CD4-positive, alpha-beta T cell (primary cell): ENCODE measurements at regions of chr17 and their contacts with region 1.

Region 1: GRCh38 chr17:45218895-45219661 is 2.6 kb upstream of the FMNL1 start:
- DNase-seq: peak; percentile 74 to 94 (median 86)
- ATAC-seq: peak; percentile 43
- H3K4me3 ChIP-seq: peak overlapping the region; percentile 4
- H3K4me3 Mint-ChIP-seq: peak overlapping the region; percentile 91
- H3K27ac ChIP-seq: peak overlapping the region in 1 of 2 donors; percentile 17
- H3K27ac Mint-ChIP-seq: peak overlapping the region; percentile 76
- H3K4me1 ChIP-seq: peaks cover 38% of the 10 kb centered on the region
- H3K4me1 Mint-ChIP-seq: peaks cover 36% of the 10 kb centered on the region
- H3K27me3 ChIP-seq: no peaks in the 10 kb centered on the region
- H3K27me3 Mint-ChIP-seq: no peaks in the 10 kb centered on the region
- CTCF ChIP-seq: peak; percentile 99

Region 2: GRCh38 chr17:45148183-45149036 is 70.7 kb before region 1 on chr17 and contains the start of gene HEXIM1:
- CTCF ChIA-PET with region 1: interaction called, 20 read pairs
- POLR2A ChIA-PET with region 1: interaction called, 116 read pairs
- intact Hi-C with region 1: no loop called
- DNase-seq: peak; percentile 98 to 100 (median 99)
- ATAC-seq: peak; percentile 78
- H3K4me3 ChIP-seq: peak within 1 kb of the TSS; percentile 94
- H3K4me3 Mint-ChIP-seq: peak within 1 kb of the TSS; percentile 94
- H3K27ac ChIP-seq: peak within 1 kb of the TSS; percentile 93 to 97
- H3K27ac Mint-ChIP-seq: peak within 1 kb of the TSS; percentile 99
- H3K4me1 ChIP-seq: peaks cover 71% of the 10 kb centered on the region
- H3K4me1 Mint-ChIP-seq: peaks cover 69% of the 10 kb centered on the region
- H3K27me3 ChIP-seq: no peaks in the 10 kb centered on the region
- H3K27me3 Mint-ChIP-seq: peaks cover 8% of the 10 kb centered on the region
- CTCF ChIP-seq: no peak
- total RNA-seq, gene HEXIM1: 50.5 to 50.9 TPM

Region 3: GRCh38 chr17:45235416-45236281 is 16.6 kb after region 1 on chr17:
- CTCF ChIA-PET with region 1: interaction called, 112 read pairs
- POLR2A ChIA-PET with region 1: interaction called, 346 read pairs
- intact Hi-C with region 1: loop called (anchors 1 kb)
- DNase-seq: peak; percentile 70 to 92 (median 78)
- ATAC-seq: peak; percentile 63
- H3K4me3 ChIP-seq: no peak overlapping the region
- H3K4me3 Mint-ChIP-seq: peak overlapping the region; percentile 39
- H3K27ac ChIP-seq: peak overlapping the region; percentile 41 to 44
- H3K27ac Mint-ChIP-seq: peak overlapping the region; percentile 100
- H3K4me1 ChIP-seq: peaks cover 76% of the 10 kb centered on the region
- H3K4me1 Mint-ChIP-seq: peaks cover 65% of the 10 kb centered on the region
- H3K27me3 ChIP-seq: no peaks in the 10 kb centered on the region
- H3K27me3 Mint-ChIP-seq: no peaks in the 10 kb centered on the region
- CTCF ChIP-seq: peak; percentile 93

Region 4: DNA sequence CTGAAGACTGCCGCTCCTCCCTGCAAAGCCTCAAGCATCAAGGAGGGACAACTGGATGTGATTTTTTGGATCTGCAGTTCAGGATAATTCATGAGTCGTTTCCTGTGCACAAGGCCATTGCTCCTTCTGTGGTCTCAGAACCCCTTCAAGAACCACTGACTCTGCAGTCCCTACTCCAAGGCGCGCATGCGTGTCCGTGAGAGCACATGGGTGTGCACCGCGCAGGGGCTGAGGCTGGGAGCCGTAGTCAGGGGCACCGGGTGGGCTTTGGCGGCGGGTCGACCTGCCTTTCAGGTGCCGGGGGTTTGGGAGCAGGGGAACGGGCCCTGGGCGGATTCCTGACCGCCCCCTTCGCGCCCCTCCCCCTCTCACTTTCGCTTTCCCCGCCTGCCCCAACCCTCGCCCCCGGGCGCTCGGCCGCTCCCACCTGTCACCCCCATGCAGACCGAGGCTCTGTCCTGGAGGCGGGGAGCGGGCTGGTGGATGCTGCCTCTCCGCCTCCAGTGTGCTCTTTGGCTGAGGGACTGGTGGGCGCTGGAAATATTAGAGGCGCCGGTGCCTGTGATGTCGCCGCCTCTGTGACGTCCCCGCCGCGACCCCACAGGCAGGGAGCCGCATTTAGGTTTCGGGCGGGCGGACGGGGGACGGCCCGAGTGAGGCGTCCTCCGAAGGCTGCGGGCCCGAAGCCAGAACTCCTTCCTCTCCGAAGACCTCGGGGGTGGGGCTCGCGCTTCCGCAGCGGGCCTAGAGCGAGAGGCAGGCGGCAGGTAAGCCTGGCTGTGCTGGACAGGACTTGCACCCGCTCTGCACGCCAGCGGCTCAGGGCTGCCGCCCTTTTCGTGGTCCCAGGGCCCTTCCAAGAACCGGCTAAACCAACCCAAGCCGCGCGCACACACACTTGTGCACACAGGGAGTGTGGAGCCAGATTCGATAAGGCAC is 42.8 kb after region 1 on chr17 and contains the start of gene SPATA32:
- CTCF ChIA-PET with region 1: interaction called, 10 read pairs
- POLR2A ChIA-PET with region 1: interaction called, 23 read pairs
- intact Hi-C with region 1: no loop called
- DNase-seq: peak; percentile 38 to 80 (median 66)
- ATAC-seq: peak; percentile 88
- H3K4me3 ChIP-seq: peak within 1 kb of the TSS; percentile 75
- H3K4me3 Mint-ChIP-seq: peak within 1 kb of the TSS; percentile 89
- H3K27ac ChIP-seq: peak within 1 kb of the TSS; percentile 65
- H3K27ac Mint-ChIP-seq: peak within 1 kb of the TSS; percentile 84
- H3K4me1 ChIP-seq: peaks cover 37% of the 10 kb centered on the region
- H3K4me1 Mint-ChIP-seq: peaks cover 40% of the 10 kb centered on the region
- H3K27me3 ChIP-seq: no peaks in the 10 kb centered on the region
- H3K27me3 Mint-ChIP-seq: no peaks in the 10 kb centered on the region
- CTCF ChIP-seq: no peak
- total RNA-seq, gene SPATA32: 0.20 to 0.27 TPM

Region 5: GRCh38 chr17:45277216-45277849 is 58.3 kb after region 1 on chr17:
- CTCF ChIA-PET with region 1: interaction called, 32 read pairs
- POLR2A ChIA-PET with region 1: interaction called, 10 read pairs
- intact Hi-C with region 1: loop called in 1 of 2 experiments (anchors 2 kb)
- DNase-seq: peak; percentile 84 to 97 (median 90)
- ATAC-seq: peak; percentile 96
- H3K4me3 ChIP-seq: no peak overlapping the region
- H3K4me3 Mint-ChIP-seq: no peak overlapping the region
- H3K27ac ChIP-seq: peak overlapping the region in 1 of 2 donors; percentile 22
- H3K27ac Mint-ChIP-seq: peak overlapping the region; percentile 51
- H3K4me1 ChIP-seq: peaks cover 6% of the 10 kb centered on the region
- H3K4me1 Mint-ChIP-seq: peaks cover 12% of the 10 kb centered on the region
- H3K27me3 ChIP-seq: no peaks in the 10 kb centered on the region
- H3K27me3 Mint-ChIP-seq: no peaks in the 10 kb centered on the region
- CTCF ChIP-seq: peak; percentile 83

Region 6: GRCh38 chr17:45385331-45385997 is 166.4 kb after region 1 on chr17:
- CTCF ChIA-PET with region 1: interaction called, 29 read pairs
- POLR2A ChIA-PET with region 1: interaction called, 10 read pairs
- intact Hi-C with region 1: loop called (anchors 1 kb)
- DNase-seq: peak; percentile 77 to 97 (median 88)
- ATAC-seq: peak; percentile 97
- H3K4me3 ChIP-seq: no peak overlapping the region
- H3K4me3 Mint-ChIP-seq: no peak overlapping the region
- H3K27ac ChIP-seq: no peak overlapping the region
- H3K27ac Mint-ChIP-seq: no peak overlapping the region
- H3K4me1 ChIP-seq: peaks cover 10% of the 10 kb centered on the region
- H3K4me1 Mint-ChIP-seq: peaks cover 4% of the 10 kb centered on the region
- H3K27me3 ChIP-seq: no peaks in the 10 kb centered on the region
- H3K27me3 Mint-ChIP-seq: peaks cover 12% of the 10 kb centered on the region
- CTCF ChIP-seq: peak; percentile 95